ENCODE measurements at regions of chrX and their contacts with region 1.

Region 1: DNA sequence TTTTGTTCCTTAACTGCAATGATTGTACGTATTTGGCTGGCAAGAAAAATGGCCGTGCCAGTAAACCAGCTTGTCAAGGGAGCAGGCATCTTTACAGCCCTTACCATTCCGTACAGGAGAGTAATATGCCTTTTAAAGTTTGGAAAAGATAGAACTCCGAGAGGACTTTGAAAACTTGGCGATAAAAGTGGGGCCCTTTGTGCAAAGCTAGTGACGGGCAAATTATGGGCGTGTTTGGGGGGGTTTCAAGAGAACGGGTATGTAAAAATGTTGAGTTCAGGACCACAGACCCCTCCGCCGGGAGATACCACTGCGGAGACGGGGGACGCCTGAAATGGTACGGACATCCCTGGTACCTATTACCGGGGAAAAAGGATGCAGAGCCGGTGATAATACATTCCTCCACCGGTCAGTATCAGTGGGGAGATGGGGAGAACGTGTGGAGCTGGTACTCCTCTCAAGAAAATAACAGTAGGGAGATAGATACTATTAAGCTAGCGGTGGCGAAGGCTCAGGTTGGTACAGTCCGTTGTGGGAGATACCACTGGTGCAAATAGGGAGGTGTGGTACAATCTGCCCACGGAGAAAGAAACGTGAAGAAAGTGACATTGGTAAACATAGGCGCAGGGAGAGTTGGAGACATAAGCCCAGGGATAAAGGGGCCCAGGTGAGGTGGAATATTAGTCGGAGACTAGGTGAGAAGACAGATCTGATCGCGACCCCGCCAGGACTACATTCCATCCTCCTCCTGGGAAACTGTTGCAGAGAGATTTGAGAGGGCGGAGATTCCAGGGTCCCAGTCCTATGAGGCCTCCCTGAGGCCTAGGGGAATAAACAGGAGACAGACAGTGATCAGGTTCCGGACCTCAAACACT is 14.5 kb downstream of the SPACA5 start:
- DNase-seq: peak; percentile 84
- H3K4me3 ChIP-seq: peak overlapping the region; percentile 56 to 90 (median 61)
- H3K27ac ChIP-seq: peak overlapping the region; percentile 98
- H3K4me1 ChIP-seq: peaks cover 4% of the 10 kb centered on the region
- H3K27me3 ChIP-seq: no peaks in the 10 kb centered on the region
- CTCF ChIP-seq: no peak
- POLR2A ChIP-seq: no peak

Region 2: DNA sequence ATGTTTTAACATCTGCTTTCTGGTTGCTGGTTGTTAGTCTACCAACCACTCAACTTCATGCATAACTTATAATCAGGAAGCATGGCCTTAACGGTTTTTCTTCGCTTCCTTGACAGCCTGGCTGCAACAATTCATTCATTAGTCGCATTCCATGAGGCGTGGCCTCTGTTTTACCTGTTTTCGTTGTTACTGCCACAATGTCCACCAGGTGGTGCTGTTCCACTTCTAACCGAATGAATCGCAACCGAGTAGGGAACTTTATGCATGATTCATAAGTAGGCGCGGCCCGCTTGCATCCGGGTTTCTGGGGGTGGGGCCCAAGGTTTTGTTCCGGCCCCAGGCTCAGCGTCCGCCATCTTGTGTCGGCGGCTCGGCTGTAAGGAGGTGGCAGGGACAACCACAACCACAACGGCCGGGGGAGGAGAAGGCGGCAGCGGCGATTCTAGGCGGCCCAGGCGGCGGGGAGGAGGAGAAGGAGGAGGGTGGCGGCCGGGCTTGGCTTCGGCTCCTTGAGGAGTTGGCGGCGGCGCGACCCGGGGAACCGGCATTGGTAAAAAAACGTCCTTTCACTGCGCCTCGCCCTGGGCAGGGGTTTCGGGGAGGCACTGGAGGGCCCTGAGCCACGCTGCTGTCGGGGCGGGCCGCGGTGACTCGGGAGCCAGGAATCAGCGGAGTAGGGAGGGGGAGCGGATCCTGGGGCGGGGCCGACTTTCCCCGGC is 827.6 kb before region 1 on chrX and contains the start of gene UBA1:
- CTCF ChIA-PET with region 1: no interaction called
- POLR2A ChIA-PET with region 1: no interaction called
- dilution Hi-C with region 1: no loop called
- intact Hi-C with region 1: loop called (anchors 2 kb)
- DNase-seq: peak; percentile 95
- H3K4me3 ChIP-seq: peak within 1 kb of the TSS; percentile 77 to 88 (median 88)
- H3K27ac ChIP-seq: peak within 1 kb of the TSS; percentile 76
- H3K4me1 ChIP-seq: peaks cover 39% of the 10 kb centered on the region
- H3K27me3 ChIP-seq: no peaks in the 10 kb centered on the region
- CTCF ChIP-seq: peak; percentile 49 to 58
- POLR2A ChIP-seq: peak; percentile 74
- total RNA-seq, gene UBA1: 236 and 237 TPM in 2 replicates

Region 3: GRCh38 chrX:47650164-47651042 is 370.9 kb before region 1 on chrX and contains the start of gene ELK1:
- CTCF ChIA-PET with region 1: no interaction called
- POLR2A ChIA-PET with region 1: no interaction called
- dilution Hi-C with region 1: no loop called
- intact Hi-C with region 1: loop called (anchors 2 kb)
- DNase-seq: peak; percentile 98
- H3K4me3 ChIP-seq: peak within 1 kb of the TSS; percentile 19 to 88 (median 56)
- H3K27ac ChIP-seq: peak within 1 kb of the TSS; percentile 21
- H3K4me1 ChIP-seq: peaks cover 14% of the 10 kb centered on the region
- H3K27me3 ChIP-seq: no peaks in the 10 kb centered on the region
- CTCF ChIP-seq: no peak
- POLR2A ChIP-seq: no peak
- total RNA-seq, gene ELK1: 27.5 and 28.7 TPM in 2 replicates

Region 4: DNA sequence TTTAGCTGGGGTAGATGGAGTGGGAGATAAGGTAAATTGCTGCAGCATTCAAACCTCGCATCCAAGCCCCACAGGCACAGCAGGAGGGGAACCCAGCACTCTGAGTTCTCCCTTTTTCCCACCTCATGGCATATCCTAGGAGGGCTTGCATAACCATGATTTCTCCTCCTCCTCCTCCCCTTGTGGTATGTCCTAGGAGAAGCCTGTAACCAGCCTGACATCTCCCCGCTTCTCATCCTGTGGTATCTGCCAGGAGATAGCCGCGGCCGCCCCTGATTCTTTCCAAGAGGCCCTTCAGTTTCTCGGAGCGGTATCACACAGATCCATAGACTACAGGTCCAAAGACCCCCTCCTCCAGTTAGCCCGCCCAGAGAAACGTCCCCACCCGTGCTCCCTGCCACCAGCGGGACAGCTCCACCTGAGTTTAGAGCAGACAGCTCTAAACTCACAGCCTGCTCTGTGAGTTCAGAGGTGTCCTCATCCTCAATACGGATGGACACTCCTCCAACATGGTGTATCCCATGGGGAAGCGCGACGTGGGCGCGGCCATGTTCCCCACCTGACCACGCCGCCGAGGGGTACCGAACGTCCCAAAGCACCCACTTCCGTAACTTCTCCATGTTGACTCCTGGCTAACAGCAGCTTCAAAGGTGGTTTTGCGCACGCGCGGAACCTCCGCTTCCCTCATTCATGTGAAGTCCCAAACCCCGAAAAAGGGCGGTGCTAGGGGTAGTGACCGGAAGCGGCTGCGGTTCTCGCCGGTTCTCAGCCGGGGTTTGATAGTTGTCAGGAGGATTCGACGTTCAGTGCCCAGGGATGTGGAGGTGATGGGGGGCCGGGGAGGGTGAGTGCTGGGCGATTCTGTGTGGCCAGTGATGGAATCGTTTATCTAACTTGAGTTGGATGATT is 184.8 kb before region 1 on chrX and contains the start of gene ZNF81:
- CTCF ChIA-PET with region 1: no interaction called
- POLR2A ChIA-PET with region 1: no interaction called
- dilution Hi-C with region 1: no loop called
- intact Hi-C with region 1: loop called (anchors 1 kb)
- DNase-seq: peak; percentile 95
- H3K4me3 ChIP-seq: peak within 1 kb of the TSS; percentile 62 to 91 (median 67)
- H3K27ac ChIP-seq: peak within 1 kb of the TSS; percentile 55
- H3K4me1 ChIP-seq: peaks cover 4% of the 10 kb centered on the region
- H3K27me3 ChIP-seq: no peaks in the 10 kb centered on the region
- CTCF ChIP-seq: no peak
- POLR2A ChIP-seq: peak; percentile 54
- total RNA-seq, gene ZNF81: 6.4 and 9.6 TPM in 2 replicates

Region 5: GRCh38 chrX:47918274-47918673 is 103.0 kb before region 1 on chrX:
- CTCF ChIA-PET with region 1: no interaction called
- POLR2A ChIA-PET with region 1: no interaction called
- dilution Hi-C with region 1: no loop called
- intact Hi-C with region 1: no loop called
- DNase-seq: no peak
- H3K4me3 ChIP-seq: no peak overlapping the region
- H3K27ac ChIP-seq: no peak overlapping the region
- H3K4me1 ChIP-seq: no peaks in the 10 kb centered on the region
- H3K27me3 ChIP-seq: no peaks in the 10 kb centered on the region
- CTCF ChIP-seq: no peak
- POLR2A ChIP-seq: no peak

Region 6: DNA sequence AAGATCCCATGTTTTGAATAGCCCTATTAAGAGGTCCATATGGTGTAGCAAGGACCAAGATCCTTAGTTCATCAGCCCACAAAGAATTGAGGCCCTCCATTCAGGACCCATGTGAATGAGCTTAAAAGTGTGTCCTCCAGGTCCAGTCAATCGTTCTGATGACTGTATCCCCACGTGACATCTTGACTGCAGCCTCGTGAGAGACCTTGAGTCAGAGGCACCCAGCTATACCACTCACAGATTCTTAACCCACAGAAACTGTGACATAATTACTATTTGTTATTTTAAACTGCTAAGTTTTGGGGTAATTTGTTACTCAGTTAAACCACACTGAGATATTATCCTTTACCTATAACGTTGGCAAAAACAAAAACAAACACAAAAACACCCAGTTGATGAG is 79.8 kb before region 1 on chrX:
- CTCF ChIA-PET with region 1: no interaction called
- POLR2A ChIA-PET with region 1: no interaction called
- dilution Hi-C with region 1: no loop called
- intact Hi-C with region 1: no loop called
- DNase-seq: no peak
- H3K4me3 ChIP-seq: no peak overlapping the region
- H3K27ac ChIP-seq: no peak overlapping the region
- H3K4me1 ChIP-seq: no peaks in the 10 kb centered on the region
- H3K27me3 ChIP-seq: no peaks in the 10 kb centered on the region
- CTCF ChIP-seq: no peak
- POLR2A ChIP-seq: no peak

Region 7: GRCh38 chrX:47958761-47959342 is 62.4 kb before region 1 on chrX:
- CTCF ChIA-PET with region 1: interaction called, 3 read pairs
- POLR2A ChIA-PET with region 1: no interaction called
- dilution Hi-C with region 1: no loop called
- intact Hi-C with region 1: loop called (anchors 1 kb)
- DNase-seq: peak; percentile 5
- H3K4me3 ChIP-seq: no peak overlapping the region
- H3K27ac ChIP-seq: no peak overlapping the region
- H3K4me1 ChIP-seq: no peaks in the 10 kb centered on the region
- H3K27me3 ChIP-seq: no peaks in the 10 kb centered on the region
- CTCF ChIP-seq: peak in 1 of 2 donors; percentile 32
- POLR2A ChIP-seq: no peak

Region 8: GRCh38 chrX:48045410-48046331 is 24.4 kb after region 1 on chrX:
- CTCF ChIA-PET with region 1: no interaction called
- POLR2A ChIA-PET with region 1: no interaction called
- dilution Hi-C with region 1: no loop called
- intact Hi-C with region 1: no loop called
- DNase-seq: peak; percentile 43
- H3K4me3 ChIP-seq: no peak overlapping the region
- H3K27ac ChIP-seq: no peak overlapping the region
- H3K4me1 ChIP-seq: peaks cover 13% of the 10 kb centered on the region
- H3K27me3 ChIP-seq: no peaks in the 10 kb centered on the region
- CTCF ChIP-seq: no peak
- POLR2A ChIP-seq: no peak